GM10248 (cell line): ENCODE measurements at regions of chr20 and their contacts with region 1.

Region 1: GRCh38 chr20:35871311-35871771 is 83.0 kb downstream of the SCAND1 start:
- DNase-seq: no peak
- CTCF ChIP-seq: no peak

Region 2: DNA sequence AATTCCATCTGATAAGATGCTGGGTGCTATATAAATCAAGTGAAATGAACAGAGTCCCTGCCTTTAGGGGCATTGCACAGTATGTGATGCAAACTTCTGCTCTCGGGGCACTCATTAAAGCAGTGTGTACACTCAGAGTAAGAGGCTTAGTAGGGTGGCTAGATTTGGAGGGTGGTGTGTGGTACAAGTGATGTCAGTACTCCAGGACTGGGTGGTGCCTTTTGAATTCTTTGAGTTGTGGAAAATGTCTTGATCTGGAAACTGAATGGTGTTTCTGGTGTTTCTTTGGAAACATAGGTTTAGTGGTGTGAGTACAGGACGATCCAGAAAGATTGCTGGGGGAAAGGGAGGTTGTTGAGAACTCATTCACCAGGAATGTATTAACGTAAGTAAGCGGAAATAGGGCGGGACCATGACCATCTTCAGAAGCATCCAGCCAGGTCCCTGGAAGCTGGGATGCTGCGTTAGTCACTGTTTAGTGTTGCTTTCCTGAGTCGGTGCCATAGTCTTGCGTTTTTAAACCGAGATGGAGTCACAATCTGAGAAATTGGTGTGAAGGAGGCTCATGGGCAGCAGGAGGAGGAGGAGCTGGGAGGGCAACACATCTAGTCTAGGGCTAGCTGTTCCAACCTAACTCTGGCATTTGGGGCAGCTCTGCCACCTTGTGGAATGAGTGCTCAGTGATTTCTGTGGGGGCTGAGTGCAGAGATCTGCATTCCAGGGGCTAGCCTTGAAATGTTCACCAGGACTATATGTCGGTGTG is 12.6 kb after region 1 on chr20:
- CTCF ChIA-PET with region 1: interaction called, 12 read pairs
- POLR2A ChIA-PET with region 1: no interaction called
- DNase-seq: peak; percentile 54
- CTCF ChIP-seq: peak; percentile 70